GM12878 (cell line): ENCODE measurements at regions of chr14 and their contacts with region 1.

Region 1: DNA sequence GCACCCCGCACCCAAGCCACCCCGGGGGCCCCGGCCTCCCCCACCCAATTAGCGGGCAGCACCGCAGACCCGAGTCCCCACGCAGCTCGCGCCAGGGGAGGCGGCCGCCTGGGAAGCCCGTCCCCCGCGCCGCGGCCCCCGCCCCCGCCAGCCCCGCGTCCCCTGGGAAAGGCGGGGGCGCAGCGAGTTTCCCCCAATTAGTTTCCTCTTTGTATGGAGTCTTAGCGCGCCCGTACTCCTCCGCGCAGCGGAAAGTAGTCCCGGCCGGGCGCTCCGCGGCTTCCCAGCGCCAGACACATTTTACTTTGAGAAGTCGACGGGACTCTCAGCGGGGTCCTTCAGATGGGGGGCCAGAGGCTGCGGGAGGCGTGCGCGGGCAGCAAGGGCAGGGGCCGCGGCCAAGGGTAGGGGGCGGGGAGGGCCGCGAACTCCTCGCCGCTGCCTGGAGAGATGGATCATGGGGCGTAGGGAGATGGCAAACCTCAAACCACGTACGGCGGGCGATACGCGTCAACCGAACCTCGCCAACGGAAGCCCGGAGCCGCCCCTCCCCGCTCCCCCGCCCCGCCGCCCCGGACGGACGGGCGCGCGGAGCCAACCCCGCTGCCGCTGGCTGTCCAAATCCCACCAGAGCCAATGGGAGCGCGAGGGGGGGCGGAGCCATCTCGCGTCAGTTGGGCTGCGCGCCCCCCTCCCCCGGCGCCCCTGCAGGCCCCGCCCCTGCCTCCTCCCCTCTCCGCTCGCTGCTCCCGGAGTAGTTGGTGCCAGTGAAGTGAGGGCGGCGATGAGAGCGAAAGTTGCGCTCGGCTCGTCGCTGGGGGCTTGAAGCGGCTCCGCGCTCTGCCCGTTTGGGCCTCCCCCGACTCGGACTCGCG is at the start of gene RCOR1:
- DNase-seq: peak; percentile 80
- ATAC-seq: peak; percentile 89
- H3K4me3 ChIP-seq: peak within 1 kb of the TSS; percentile 96
- H3K27ac ChIP-seq: peak within 1 kb of the TSS; percentile 92
- H3K4me1 ChIP-seq: 0 out of 2 replicates have a peak, but pooled peaks cover 4% of the 10 kb centered on the region
- H3K27me3 ChIP-seq: no peaks in the 10 kb centered on the region; a peak in 1 of 4 replicates
- CTCF ChIP-seq: no peak
- EP300 ChIP-seq: peak in 1 of 2 experiments; percentile 43; a peak in 2 of 4 replicates
- POLR2A ChIP-seq: peak; percentile 92
- RAD21 ChIP-seq: no peak
- polyA plus RNA-seq, gene RCOR1: 1.9 to 2.2 TPM

Region 2: DNA sequence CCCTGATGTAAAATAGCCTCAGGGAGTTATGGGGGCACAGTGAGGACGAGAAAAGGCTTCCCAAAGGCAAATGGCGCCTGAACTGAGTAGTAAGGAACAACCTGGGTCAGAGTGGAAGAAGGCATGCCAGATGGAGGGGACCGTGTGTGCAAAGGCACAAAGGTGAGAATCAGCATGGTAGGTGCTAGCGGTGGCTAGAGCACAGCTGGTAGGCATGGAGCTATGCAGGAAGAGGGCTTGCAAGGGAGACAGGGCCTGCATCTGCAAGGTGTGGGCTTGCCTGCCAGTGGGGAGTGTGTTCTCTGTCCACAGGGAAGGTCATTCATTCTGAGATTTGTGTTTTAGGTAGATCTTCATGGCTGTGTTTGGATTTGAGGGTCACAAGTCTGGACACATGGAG is 486.8 kb before region 1 on chr14:
- CTCF ChIA-PET with region 1: no interaction called
- POLR2A ChIA-PET with region 1: no interaction called
- RAD21 ChIA-PET with region 1: no interaction called
- SMC1A ChIA-PET with region 1: no interaction called
- in situ Hi-C with region 1: no loop called
- intact Hi-C with region 1: no loop called
- DNase-seq: no peak
- ATAC-seq: no peak
- H3K4me3 ChIP-seq: no peak overlapping the region
- H3K27ac ChIP-seq: no peak overlapping the region
- H3K4me1 ChIP-seq: peaks cover 10% of the 10 kb centered on the region
- H3K27me3 ChIP-seq: no peaks in the 10 kb centered on the region
- CTCF ChIP-seq: no peak
- EP300 ChIP-seq: no peak
- POLR2A ChIP-seq: no peak
- RAD21 ChIP-seq: no peak

Region 3: DNA sequence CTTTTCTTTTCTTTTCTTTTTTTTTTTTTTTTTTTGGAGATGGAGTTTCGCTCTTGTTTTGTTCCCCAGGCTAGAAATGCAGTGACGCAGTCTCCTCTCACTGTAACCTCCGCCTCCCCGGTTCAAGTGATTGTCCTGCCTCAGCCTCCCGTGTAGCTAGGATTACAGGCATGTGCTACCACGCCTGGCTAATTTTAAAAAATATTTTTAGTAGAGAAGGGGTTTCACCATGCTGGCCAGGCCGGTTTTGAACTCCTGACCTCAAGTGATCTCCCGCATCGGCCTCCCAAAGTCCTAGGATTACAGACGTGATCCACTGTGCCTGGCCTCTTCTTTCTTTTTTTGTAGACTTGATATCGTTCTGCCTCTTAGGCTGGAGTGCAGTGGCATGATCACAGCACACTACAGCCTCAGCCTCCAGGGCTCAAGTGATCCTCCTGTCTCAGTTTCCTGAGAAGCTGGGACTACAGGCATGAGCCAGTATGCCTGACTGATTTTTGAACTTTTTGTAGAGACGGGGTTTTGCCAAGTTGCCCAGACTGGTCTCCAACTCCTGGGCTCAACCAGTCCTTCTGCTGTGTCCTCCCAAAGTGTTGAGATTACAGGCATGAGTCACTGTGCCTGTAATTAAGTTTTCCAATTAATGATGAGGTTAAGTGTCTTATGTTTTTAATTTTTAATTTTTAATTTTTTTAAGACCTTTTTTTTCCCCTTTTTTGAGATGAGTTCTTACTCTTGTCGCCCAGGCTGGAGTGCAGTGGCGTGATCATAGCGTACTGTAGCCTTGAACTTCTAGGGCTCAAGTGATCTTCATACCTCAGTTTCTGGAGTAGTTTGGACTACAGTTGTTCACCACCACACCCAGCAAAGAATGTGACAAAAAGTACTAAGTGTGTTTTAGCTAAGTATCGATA is 10.5 kb after region 1 on chr14:
- CTCF ChIA-PET with region 1: interaction called, 78 read pairs
- POLR2A ChIA-PET with region 1: interaction called, 24 read pairs
- RAD21 ChIA-PET with region 1: interaction called, 23 read pairs
- SMC1A ChIA-PET with region 1: interaction called, 68 read pairs
- in situ Hi-C with region 1: no loop called
- intact Hi-C with region 1: no loop called
- DNase-seq: no peak
- ATAC-seq: no peak
- H3K4me3 ChIP-seq: no peak overlapping the region
- H3K27ac ChIP-seq: no peak overlapping the region
- H3K4me1 ChIP-seq: peaks cover 34% of the 10 kb centered on the region
- H3K27me3 ChIP-seq: no peaks in the 10 kb centered on the region
- CTCF ChIP-seq: no peak
- EP300 ChIP-seq: no peak
- POLR2A ChIP-seq: no peak
- RAD21 ChIP-seq: no peak

Region 4: DNA sequence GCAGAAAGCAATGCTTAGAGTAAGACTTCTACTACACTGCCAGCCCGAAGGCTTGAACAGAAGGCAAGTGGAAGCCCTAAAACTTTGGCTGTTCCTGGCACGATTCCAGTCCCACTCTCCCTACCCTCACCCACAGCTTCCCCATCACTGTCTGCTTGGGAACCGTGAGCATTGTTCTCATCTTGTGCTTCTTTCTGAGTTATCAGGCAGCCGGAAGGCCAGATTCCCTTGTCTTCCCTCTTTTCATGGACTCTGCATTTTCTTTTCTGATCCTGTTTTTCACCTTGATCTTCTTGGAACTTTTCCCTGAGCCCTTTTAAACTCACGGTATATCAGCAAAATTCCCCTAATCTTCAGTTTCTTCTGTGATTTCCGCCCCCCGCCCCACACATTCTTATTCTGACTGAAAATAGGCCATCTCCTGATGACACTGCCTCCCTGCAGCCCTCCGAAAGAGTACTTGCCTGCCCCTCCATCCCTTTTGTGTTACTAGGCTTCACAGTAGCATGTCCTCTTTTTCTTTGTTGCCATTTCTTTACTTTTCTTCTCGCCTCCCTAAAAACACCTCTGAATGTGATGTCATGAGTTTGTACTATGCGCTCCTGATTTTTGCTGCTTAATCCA is 30.2 kb after region 1 on chr14:
- CTCF ChIA-PET with region 1: interaction called, 10 read pairs
- POLR2A ChIA-PET with region 1: no interaction called
- RAD21 ChIA-PET with region 1: interaction called, 7 read pairs
- SMC1A ChIA-PET with region 1: interaction called, 14 read pairs
- in situ Hi-C with region 1: no loop called
- intact Hi-C with region 1: no loop called
- DNase-seq: no peak
- ATAC-seq: peak; percentile 24; the same call in 1 of the 3 replicates
- H3K4me3 ChIP-seq: no peak overlapping the region; the same call in 1 of the 2 replicates
- H3K27ac ChIP-seq: peak overlapping the region; percentile 4; the same call in 1 of the 2 replicates
- H3K4me1 ChIP-seq: peaks cover 15% of the 10 kb centered on the region
- H3K27me3 ChIP-seq: no peaks in the 10 kb centered on the region
- CTCF ChIP-seq: no peak
- EP300 ChIP-seq: no peak
- POLR2A ChIP-seq: no peak
- RAD21 ChIP-seq: no peak

Region 5: GRCh38 chr14:102683399-102684297 is 91.5 kb after region 1 on chr14:
- CTCF ChIA-PET with region 1: interaction called, 15 read pairs
- POLR2A ChIA-PET with region 1: interaction called, 4 read pairs
- RAD21 ChIA-PET with region 1: interaction called, 5 read pairs
- SMC1A ChIA-PET with region 1: no interaction called
- in situ Hi-C with region 1: no loop called
- intact Hi-C with region 1: no loop called
- DNase-seq: no peak
- ATAC-seq: no peak
- H3K4me3 ChIP-seq: no peak overlapping the region
- H3K27ac ChIP-seq: no peak overlapping the region
- H3K4me1 ChIP-seq: no peaks in the 10 kb centered on the region
- H3K27me3 ChIP-seq: no peaks in the 10 kb centered on the region
- CTCF ChIP-seq: no peak
- EP300 ChIP-seq: no peak
- POLR2A ChIP-seq: no peak
- RAD21 ChIP-seq: no peak